Activated B cell treated with CpG ODN at 0.5 μM for 24 hours (primary cell): ENCODE measurements at regions of chr11 and their contacts with region 1.

Region 1: GRCh38 chr11:65471410-65471762 is 27.5 kb upstream of the MALAT1 start:
- DNase-seq: no peak
- ATAC-seq: no peak
- H3K4me3 Mint-ChIP-seq: peak overlapping the region; percentile 66
- H3K27ac Mint-ChIP-seq: peak overlapping the region; percentile 91
- H3K4me1 Mint-ChIP-seq: peaks cover 36% of the 10 kb centered on the region
- H3K27me3 Mint-ChIP-seq: no peaks in the 10 kb centered on the region
- CTCF ChIP-seq: no peak

Region 2: GRCh38 chr11:65425105-65425970 is 46.0 kb before region 1 on chr11:
- CTCF ChIA-PET with region 1: interaction called, 4 read pairs
- POLR2A ChIA-PET with region 1: interaction called, 313 read pairs
- intact Hi-C with region 1: loop called (anchors 2 kb)
- DNase-seq: no peak
- ATAC-seq: peak; percentile 38
- H3K4me3 Mint-ChIP-seq: peak overlapping the region; percentile 100
- H3K27ac Mint-ChIP-seq: peak overlapping the region; percentile 100
- H3K4me1 Mint-ChIP-seq: peaks cover 78% of the 10 kb centered on the region
- H3K27me3 Mint-ChIP-seq: no peaks in the 10 kb centered on the region
- CTCF ChIP-seq: no peak

Region 3: DNA sequence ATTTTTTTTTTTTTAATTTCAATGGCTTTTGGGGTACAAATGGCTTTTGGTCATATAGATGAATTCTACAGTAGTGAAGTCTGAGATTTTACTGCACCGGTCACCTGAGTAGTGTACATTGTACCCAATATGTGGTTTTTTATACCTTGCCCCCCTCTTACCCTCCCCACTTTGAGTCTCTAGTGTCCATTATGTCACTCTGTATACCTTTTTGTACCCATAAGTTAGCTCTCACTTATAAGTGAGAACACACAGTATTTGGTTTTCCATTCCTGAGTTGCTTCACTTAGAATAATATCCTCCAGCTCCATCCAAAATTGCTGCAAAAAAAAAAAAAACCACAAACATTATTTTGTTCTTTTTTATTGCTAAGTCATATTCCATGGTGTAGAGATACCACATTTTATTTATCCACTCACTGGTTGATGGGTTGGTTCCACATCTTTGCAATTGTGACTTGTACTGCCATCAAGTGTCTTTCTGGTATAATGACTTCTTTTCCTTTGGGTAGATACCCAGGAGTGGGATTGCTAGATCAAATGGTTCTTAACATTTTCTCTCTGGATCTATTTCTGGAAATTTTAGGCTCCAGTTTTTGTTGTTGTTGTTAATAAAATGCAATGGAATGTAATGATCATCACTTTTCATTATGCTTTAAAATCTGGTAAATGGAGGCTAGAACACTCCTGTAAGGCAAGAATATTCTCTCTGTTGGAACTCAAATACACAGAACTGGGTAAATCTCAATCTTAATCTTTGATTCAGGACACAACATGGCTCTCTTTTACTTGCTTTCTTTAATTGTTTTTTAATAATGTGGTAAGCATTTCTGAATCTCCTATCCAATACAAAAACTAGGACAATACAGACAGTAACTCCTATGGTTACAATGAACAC is 38.5 kb before region 1 on chr11:
- CTCF ChIA-PET with region 1: interaction called, 3 read pairs
- POLR2A ChIA-PET with region 1: interaction called, 18 read pairs
- intact Hi-C with region 1: loop called (anchors 2 kb)
- DNase-seq: no peak
- ATAC-seq: peak; percentile 30
- H3K4me3 Mint-ChIP-seq: no peak overlapping the region
- H3K27ac Mint-ChIP-seq: peak overlapping the region; percentile 73
- H3K4me1 Mint-ChIP-seq: peaks cover 64% of the 10 kb centered on the region
- H3K27me3 Mint-ChIP-seq: no peaks in the 10 kb centered on the region
- CTCF ChIP-seq: no peak

Region 4: GRCh38 chr11:65454696-65455456 is 16.5 kb before region 1 on chr11:
- CTCF ChIA-PET with region 1: no interaction called
- POLR2A ChIA-PET with region 1: interaction called, 29 read pairs
- intact Hi-C with region 1: loop called (anchors 1 kb)
- DNase-seq: peak; percentile 83
- ATAC-seq: peak; percentile 98
- H3K4me3 Mint-ChIP-seq: peak overlapping the region; percentile 95
- H3K27ac Mint-ChIP-seq: peak overlapping the region; percentile 90
- H3K4me1 Mint-ChIP-seq: peaks cover 32% of the 10 kb centered on the region
- H3K27me3 Mint-ChIP-seq: no peaks in the 10 kb centered on the region
- CTCF ChIP-seq: no peak

Region 5: DNA sequence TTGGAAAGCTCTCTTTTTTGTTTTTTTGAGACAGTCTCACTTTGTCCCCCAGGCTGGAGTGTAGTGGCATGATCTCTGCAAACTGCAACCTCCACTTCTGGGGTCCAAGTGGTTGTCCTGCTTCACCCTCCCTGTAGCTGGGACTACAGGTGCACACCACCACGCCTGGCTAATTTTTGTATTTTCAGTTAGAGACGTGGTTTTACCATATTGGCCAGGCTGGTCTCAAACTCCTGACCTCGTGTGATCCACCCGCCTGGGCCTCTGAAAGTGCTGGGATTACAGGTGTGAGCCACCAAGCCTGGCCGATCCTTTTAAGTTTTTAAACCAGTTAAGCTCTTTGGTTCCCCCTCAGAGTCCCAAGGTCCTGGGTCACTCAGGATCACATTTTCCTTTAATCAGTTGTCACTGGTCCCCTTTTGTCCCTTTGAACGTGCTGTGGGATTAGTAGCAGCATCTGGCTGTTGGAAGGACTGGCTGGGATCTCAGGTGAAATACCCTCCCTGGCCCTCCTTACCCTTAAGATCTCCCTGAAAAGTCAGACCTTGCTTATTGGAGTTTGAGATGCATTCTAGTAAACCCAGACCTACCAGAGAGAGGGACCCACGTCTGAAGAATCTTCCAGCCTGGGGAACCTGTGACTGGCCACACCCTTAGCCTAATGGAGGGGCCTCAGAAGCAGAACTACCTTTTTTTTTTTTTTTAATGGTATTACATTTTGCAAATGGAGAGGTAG is 35.6 kb after region 1 on chr11:
- CTCF ChIA-PET with region 1: interaction called, 4 read pairs
- POLR2A ChIA-PET with region 1: interaction called, 1,949 read pairs
- intact Hi-C with region 1: loop called (anchors 2 kb)
- DNase-seq: no peak
- ATAC-seq: peak; percentile 49
- H3K4me3 Mint-ChIP-seq: no peak overlapping the region
- H3K27ac Mint-ChIP-seq: peak overlapping the region; percentile 84
- H3K4me1 Mint-ChIP-seq: peaks cover 62% of the 10 kb centered on the region
- H3K27me3 Mint-ChIP-seq: no peaks in the 10 kb centered on the region
- CTCF ChIP-seq: no peak

Region 6: GRCh38 chr11:65779851-65780577 is 308.6 kb after region 1 on chr11:
- CTCF ChIA-PET with region 1: no interaction called
- POLR2A ChIA-PET with region 1: no interaction called
- intact Hi-C with region 1: no loop called
- DNase-seq: peak; percentile 78
- ATAC-seq: peak; percentile 63
- H3K4me3 Mint-ChIP-seq: peak overlapping the region; percentile 86
- H3K27ac Mint-ChIP-seq: peak overlapping the region; percentile 59
- H3K4me1 Mint-ChIP-seq: peaks cover 13% of the 10 kb centered on the region
- H3K27me3 Mint-ChIP-seq: no peaks in the 10 kb centered on the region
- CTCF ChIP-seq: no peak

Region 7: GRCh38 chr11:66119348-66120133 is 648.2 kb after region 1 on chr11:
- CTCF ChIA-PET with region 1: no interaction called
- POLR2A ChIA-PET with region 1: no interaction called
- intact Hi-C with region 1: no loop called
- DNase-seq: no peak
- ATAC-seq: no peak
- H3K4me3 Mint-ChIP-seq: no peak overlapping the region
- H3K27ac Mint-ChIP-seq: peak overlapping the region; percentile 39
- H3K4me1 Mint-ChIP-seq: peaks cover 87% of the 10 kb centered on the region
- H3K27me3 Mint-ChIP-seq: no peaks in the 10 kb centered on the region
- CTCF ChIP-seq: no peak